ENCODE measurements at regions of chr17 and their contacts with region 1.

Region 1: DNA sequence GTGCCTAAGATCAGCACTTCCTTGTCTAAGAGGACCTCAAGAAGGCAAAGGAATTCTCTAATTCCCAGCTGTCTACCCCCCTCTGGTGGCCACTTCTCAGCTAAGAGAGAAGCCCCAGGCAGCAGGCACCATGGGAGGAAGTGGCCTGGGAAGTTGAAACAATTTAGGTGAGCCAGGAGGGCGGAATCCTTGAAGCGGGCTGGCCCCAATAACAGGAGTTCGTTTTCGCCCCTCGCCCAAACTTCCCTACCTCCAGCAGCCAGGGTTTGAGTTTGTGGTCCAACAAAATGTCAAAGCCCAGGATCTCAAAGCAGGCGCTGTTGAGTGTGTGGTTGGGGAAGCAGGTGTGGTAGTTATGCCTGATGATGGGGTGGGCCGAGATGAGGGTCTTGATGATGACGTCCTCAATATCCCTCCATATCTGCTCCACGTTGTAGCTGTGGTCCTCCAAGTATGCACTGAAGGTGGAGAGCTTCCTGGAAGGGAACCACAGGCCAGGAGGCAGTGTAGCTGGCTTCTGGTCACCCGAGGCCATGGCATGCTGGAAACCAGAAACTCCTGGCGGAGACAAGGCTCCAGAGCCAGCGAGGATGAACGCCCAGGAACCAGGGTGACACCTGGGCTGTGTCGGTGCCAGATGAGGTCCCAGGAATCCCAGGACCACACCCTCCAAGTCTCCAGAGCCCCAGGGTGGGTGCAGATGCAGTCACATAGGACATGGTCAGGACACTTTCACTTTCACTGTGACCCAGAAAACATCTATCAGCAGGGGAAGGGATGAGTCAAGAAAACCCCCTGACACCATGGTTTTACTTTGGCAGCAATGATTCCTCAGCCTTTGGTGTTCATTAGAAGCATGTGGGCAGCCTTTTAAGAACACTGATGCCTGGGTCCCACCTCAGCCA is 25.6 kb downstream of the TTLL6 start:
- DNase-seq: peak; percentile 85
- ATAC-seq: peak; percentile 92
- H3K4me3 Mint-ChIP-seq: no peak overlapping the region
- H3K27ac Mint-ChIP-seq: no peak overlapping the region
- H3K4me1 Mint-ChIP-seq: peaks cover 9% of the 10 kb centered on the region
- H3K27me3 Mint-ChIP-seq: peaks cover 2% of the 10 kb centered on the region; the same call in 1 of the 2 replicates
- CTCF ChIP-seq: peak; percentile 45; the same call in 1 of the 2 replicates

Region 2: DNA sequence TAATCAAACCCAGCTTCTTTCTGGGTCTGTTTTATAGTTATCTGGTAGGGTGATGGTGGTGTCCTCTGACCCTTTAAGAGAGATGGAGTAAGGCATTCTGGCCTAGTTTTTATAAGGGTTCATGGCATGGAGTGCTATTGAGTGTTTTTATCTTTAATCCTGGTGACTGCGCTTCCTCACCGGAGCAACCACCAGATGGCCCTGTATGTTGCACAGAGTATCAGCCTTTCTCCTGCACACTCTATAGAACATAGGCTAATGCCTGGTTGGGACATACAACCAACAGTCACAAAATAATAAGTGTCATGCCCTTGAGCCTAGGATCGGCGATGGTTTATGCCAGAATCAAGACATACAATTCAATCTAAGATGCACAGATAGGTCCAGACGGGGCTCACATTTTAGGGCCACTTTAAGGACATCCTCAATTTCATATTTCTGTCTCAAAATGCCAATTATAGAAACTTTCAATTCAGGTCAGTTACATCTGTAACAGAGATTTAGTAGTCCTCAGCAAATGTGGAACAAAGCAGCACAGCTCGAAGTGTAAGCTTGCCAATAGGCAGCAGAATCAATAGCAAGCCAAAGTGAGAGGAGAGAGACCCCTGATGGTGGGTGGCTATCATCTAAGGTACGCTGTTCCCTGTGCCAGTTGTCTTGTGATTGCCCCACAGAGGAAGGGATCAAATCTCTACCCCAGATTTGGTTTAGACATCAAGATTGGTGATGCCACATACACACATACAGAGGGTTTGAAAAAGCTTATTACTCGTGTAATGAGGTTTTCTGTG is 128.1 kb before region 1 on chr17:
- CTCF ChIA-PET with region 1: interaction called, 11 read pairs
- POLR2A ChIA-PET with region 1: no interaction called
- DNase-seq: no peak
- ATAC-seq: peak; percentile 72
- H3K4me3 Mint-ChIP-seq: no peak overlapping the region
- H3K27ac Mint-ChIP-seq: no peak overlapping the region
- H3K4me1 Mint-ChIP-seq: no peaks in the 10 kb centered on the region
- H3K27me3 Mint-ChIP-seq: peaks cover 35% of the 10 kb centered on the region
- CTCF ChIP-seq: no peak

Region 3: DNA sequence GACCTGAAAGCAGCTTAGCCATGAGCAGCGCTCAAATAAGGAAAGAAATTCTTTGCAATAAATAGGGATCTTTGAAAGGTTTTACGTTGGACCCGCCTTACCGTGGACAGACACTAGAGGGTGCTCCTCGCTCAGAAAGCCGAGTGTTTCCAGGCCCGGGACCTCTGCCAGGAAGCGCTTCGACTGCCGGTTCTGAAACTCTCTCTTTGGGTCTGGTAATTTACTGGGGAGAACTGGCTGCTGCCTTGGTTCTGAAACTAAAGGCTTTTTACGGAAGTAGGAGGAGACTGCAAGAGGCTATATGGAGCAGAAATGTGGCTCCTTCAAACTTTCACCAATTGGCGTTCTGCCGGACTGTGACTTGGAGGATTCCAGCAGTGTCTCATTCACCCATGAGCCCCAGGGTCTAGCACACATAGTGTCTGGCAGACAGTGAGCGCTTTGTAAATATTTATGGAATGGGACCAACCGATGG is 119.6 kb before region 1 on chr17:
- CTCF ChIA-PET with region 1: interaction called, 148 read pairs
- POLR2A ChIA-PET with region 1: interaction called, 3 read pairs
- DNase-seq: peak; percentile 87
- ATAC-seq: peak; percentile 96
- H3K4me3 Mint-ChIP-seq: peak overlapping the region; percentile 72
- H3K27ac Mint-ChIP-seq: no peak overlapping the region
- H3K4me1 Mint-ChIP-seq: peaks cover 12% of the 10 kb centered on the region
- H3K27me3 Mint-ChIP-seq: peaks cover 53% of the 10 kb centered on the region
- CTCF ChIP-seq: peak; percentile 79

Region 4: GRCh38 chr17:48756830-48757251 is 34.5 kb before region 1 on chr17:
- CTCF ChIA-PET with region 1: interaction called, 10 read pairs
- POLR2A ChIA-PET with region 1: no interaction called
- DNase-seq: no peak
- ATAC-seq: no peak
- H3K4me3 Mint-ChIP-seq: no peak overlapping the region
- H3K27ac Mint-ChIP-seq: no peak overlapping the region
- H3K4me1 Mint-ChIP-seq: peaks cover 16% of the 10 kb centered on the region
- H3K27me3 Mint-ChIP-seq: peaks cover 99% of the 10 kb centered on the region
- CTCF ChIP-seq: no peak

Region 5: DNA sequence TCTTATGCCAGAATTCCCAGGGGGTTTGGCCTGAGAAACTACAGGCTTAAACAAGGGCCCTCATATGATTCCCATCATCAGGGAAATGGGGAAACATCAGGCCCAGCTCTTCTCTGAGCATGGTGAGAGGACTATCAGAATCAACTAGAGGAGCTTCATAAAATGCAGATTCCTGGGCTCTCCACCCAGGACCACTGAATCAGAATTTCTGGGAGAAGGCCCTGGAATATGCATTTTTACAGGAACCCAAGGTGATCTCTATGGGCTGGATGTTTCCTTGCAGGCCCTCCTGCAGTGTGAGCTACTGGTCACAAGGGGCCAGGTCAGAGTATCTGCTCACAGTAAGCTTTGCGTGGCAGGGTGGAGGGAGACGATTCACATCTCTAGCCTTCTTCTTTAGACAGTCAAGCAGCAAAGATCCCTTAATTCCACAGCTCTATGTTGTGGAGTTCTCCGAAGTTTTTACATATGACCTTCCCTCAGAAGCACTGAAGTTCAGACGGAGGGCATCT is 24.1 kb before region 1 on chr17:
- CTCF ChIA-PET with region 1: interaction called, 14 read pairs
- POLR2A ChIA-PET with region 1: no interaction called
- DNase-seq: no peak
- ATAC-seq: peak; percentile 72
- H3K4me3 Mint-ChIP-seq: no peak overlapping the region
- H3K27ac Mint-ChIP-seq: no peak overlapping the region
- H3K4me1 Mint-ChIP-seq: no peaks in the 10 kb centered on the region
- H3K27me3 Mint-ChIP-seq: peaks cover 57% of the 10 kb centered on the region
- CTCF ChIP-seq: no peak

Region 6: GRCh38 chr17:48928876-48929811 is 137.8 kb after region 1 on chr17:
- CTCF ChIA-PET with region 1: no interaction called
- POLR2A ChIA-PET with region 1: no interaction called
- DNase-seq: no peak
- ATAC-seq: no peak
- H3K4me3 Mint-ChIP-seq: no peak overlapping the region
- H3K27ac Mint-ChIP-seq: no peak overlapping the region
- H3K4me1 Mint-ChIP-seq: no peaks in the 10 kb centered on the region
- H3K27me3 Mint-ChIP-seq: no peaks in the 10 kb centered on the region
- CTCF ChIP-seq: no peak